IMR-90 (cell line): ENCODE measurements at regions of chr10 and their contacts with region 1.

Region 1: GRCh38 chr10:109534193-109534592 is 389.1 kb downstream of the XPNPEP1 start:
- DNase-seq: no peak
- ATAC-seq: no peak
- H3K4me3 ChIP-seq: no peak overlapping the region
- H3K27ac ChIP-seq: no peak overlapping the region
- H3K4me1 ChIP-seq: no peaks in the 10 kb centered on the region
- H3K27me3 ChIP-seq: no peaks in the 10 kb centered on the region
- CTCF ChIP-seq: no peak
- POLR2A ChIP-seq: no peak
- RAD21 ChIP-seq: no peak

Region 2: DNA sequence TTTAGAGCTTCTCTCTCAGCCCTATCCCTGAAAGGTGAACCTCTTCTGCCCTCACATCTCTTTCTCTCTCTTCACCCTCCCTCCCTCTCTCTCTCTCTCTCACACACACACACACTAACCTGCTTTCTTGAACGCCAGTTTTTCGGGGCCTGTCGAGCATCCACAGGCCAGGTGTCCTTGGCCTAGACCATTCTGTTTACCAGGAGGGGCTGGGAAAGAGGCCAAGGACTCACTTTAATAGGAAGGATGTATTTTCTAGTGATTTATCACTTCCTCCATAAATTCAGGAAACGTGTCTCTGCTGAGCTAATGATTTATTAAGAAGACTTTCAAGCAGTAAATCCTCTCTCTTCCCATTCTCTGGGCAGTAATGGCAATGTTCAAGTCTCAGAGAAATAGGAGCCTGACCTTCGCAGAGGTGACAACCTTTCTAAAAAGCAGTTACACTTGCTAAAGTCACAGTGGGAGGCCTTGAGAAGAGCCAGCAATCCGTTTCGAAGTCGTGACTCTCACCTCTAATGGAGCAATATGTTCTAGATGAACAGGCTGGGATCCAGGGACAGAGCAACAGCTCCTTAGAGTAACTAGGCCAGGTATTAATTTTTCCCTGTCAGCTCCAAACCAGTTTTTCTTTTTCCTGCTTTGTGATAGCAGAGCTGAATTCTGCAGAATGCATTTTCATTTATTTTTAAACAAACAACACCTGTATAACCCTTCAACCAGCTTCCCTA is 1012.3 kb before region 1 on chr10:
- CTCF ChIA-PET with region 1: interaction called, 3 read pairs
- POLR2A ChIA-PET with region 1: interaction called, 10 read pairs
- dilution Hi-C with region 1: no loop called
- in situ Hi-C with region 1: no loop called
- intact Hi-C with region 1: no loop called
- DNase-seq: no peak
- ATAC-seq: no peak
- H3K4me3 ChIP-seq: no peak overlapping the region
- H3K27ac ChIP-seq: no peak overlapping the region
- H3K4me1 ChIP-seq: no peaks in the 10 kb centered on the region
- H3K27me3 ChIP-seq: no peaks in the 10 kb centered on the region
- CTCF ChIP-seq: no peak
- POLR2A ChIP-seq: no peak
- RAD21 ChIP-seq: no peak

Region 3: GRCh38 chr10:110425684-110426293 is 891.6 kb after region 1 on chr10:
- CTCF ChIA-PET with region 1: no interaction called
- POLR2A ChIA-PET with region 1: no interaction called
- dilution Hi-C with region 1: no loop called
- in situ Hi-C with region 1: no loop called
- intact Hi-C with region 1: no loop called
- DNase-seq: peak; percentile 99
- ATAC-seq: peak; percentile 71
- H3K4me3 ChIP-seq: no peak overlapping the region
- H3K27ac ChIP-seq: peak overlapping the region; percentile 87
- H3K4me1 ChIP-seq: peaks cover 14% of the 10 kb centered on the region
- H3K27me3 ChIP-seq: no peaks in the 10 kb centered on the region
- CTCF ChIP-seq: no peak
- POLR2A ChIP-seq: peak; percentile 28; the same call in 1 of the 2 replicates
- RAD21 ChIP-seq: no peak